Activated CD8-positive, alpha-beta T cell treated with anti-CD3 and anti-CD28 coated beads, Interleukin-2, amount 10 ng/mL, durations not matched to agents 7 days and 5 days (primary cell): ENCODE measurements at regions of chr16 and their contacts with region 1.

Region 1: DNA sequence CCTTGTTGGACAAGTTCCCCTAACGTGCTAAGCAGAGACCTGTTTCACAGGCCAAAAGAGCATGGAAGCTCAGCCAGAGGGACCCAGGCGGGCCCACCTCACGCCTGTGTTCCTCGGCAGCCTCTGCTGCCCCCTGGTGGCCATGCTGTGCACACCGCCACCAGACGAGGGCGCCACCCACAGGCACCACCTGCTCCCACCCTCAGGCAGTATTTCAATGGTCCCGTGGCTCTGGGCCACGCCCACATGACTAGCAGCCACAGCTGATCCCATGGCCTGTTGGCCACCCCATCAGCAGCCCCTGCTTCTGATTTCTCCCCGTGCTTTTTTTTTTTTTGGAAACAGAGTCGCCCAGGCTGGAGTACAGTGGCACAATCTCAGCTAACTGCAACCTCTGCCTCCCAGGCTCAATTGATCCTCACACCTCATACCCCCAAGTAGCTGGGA is 18.9 kb downstream of the MPG start:
- DNase-seq: peak; percentile 93
- ATAC-seq: peak; percentile 95
- H3K4me3 Mint-ChIP-seq: no peak overlapping the region
- H3K27ac Mint-ChIP-seq: no peak overlapping the region
- H3K4me1 Mint-ChIP-seq: peaks cover 8% of the 10 kb centered on the region
- H3K27me3 Mint-ChIP-seq: no peaks in the 10 kb centered on the region

Region 2: GRCh38 chr16:53346-54236 is 43.4 kb before region 1 on chr16 and contains the starts of genes POLR3K and SNRNP25:
- CTCF ChIA-PET with region 1: interaction called, 23 read pairs
- POLR2A ChIA-PET with region 1: interaction called, 3 read pairs
- DNase-seq: peak; percentile 99
- ATAC-seq: peak; percentile 99
- H3K4me3 Mint-ChIP-seq: peak within 1 kb of the TSS; percentile 91
- H3K27ac Mint-ChIP-seq: peak within 1 kb of the TSS; percentile 90
- H3K4me1 Mint-ChIP-seq: peaks cover 35% of the 10 kb centered on the region
- H3K27me3 Mint-ChIP-seq: no peaks in the 10 kb centered on the region
- total RNA-seq, gene POLR3K: 47.7 to 48.2 TPM
- total RNA-seq, gene SNRNP25: 62.3 to 63.2 TPM

Region 3: DNA sequence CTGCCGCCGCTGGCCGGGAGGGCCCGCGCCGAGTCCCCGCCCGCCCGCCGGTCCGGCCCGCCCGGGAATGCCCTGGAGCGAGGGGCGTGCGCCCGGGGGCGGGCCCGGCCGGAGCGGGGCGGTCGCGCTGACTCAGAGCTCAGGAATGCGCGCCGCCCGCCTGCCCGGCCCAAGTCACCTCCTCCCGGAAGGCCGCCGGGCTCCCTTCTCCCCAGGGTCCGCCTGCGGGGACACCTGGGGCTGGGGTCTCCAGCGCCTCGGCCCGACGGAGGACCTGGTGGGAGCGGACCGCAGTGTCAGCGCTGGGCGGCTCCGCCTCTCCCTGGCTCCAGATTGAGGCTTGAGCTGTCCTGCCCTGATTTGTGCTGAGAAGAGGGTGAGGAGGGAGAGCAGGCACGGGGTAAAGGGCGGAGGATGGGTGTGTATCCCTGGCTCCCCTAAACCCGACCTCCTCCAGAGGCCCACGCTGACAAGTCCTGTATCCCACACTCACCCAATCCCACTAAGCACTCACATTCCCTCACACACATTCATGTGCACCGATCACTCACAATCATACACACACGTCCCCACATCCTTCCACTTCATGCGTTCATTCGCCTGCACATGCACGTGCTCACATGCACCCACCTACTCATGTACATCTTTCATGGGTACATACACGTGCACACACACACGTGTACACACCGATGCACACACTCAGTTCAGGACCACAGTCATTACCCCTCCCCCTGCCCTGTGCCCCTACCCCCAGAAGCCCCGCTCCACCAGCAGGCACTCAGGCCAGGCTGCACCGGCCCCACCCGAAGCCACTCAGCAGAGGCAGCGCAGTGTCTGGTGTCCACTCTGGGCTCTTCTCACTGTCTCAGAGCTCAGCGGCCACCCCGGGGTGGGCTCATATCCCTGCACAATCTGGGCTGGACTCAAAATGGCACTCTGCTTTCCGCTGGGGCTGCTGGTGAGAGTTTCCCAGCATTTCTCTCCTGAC is 24.1 kb before region 1 on chr16 and contains the start of gene RHBDF1:
- CTCF ChIA-PET with region 1: interaction called, 265 read pairs
- POLR2A ChIA-PET with region 1: interaction called, 4 read pairs
- DNase-seq: no peak
- ATAC-seq: peak; percentile 40
- H3K4me3 Mint-ChIP-seq: peak within 1 kb of the TSS; percentile 22
- H3K27ac Mint-ChIP-seq: no peak within 1 kb of the TSS
- H3K4me1 Mint-ChIP-seq: peaks cover 20% of the 10 kb centered on the region
- H3K27me3 Mint-ChIP-seq: peaks cover 33% of the 10 kb centered on the region
- total RNA-seq, gene RHBDF1: 0.40 TPM in 1 of 2 experiments, not detected in the other

Region 4: GRCh38 chr16:77807-78443 is 19.0 kb before region 1 on chr16 and contains the start of gene MPG:
- CTCF ChIA-PET with region 1: interaction called, 52 read pairs
- POLR2A ChIA-PET with region 1: interaction called, 4 read pairs
- DNase-seq: peak; percentile 87
- ATAC-seq: peak; percentile 80
- H3K4me3 Mint-ChIP-seq: peak within 1 kb of the TSS; percentile 87
- H3K27ac Mint-ChIP-seq: peak within 1 kb of the TSS; percentile 87
- H3K4me1 Mint-ChIP-seq: peaks cover 32% of the 10 kb centered on the region
- H3K27me3 Mint-ChIP-seq: peaks cover 13% of the 10 kb centered on the region
- total RNA-seq, gene MPG: 48.6 to 49.3 TPM

Region 5: DNA sequence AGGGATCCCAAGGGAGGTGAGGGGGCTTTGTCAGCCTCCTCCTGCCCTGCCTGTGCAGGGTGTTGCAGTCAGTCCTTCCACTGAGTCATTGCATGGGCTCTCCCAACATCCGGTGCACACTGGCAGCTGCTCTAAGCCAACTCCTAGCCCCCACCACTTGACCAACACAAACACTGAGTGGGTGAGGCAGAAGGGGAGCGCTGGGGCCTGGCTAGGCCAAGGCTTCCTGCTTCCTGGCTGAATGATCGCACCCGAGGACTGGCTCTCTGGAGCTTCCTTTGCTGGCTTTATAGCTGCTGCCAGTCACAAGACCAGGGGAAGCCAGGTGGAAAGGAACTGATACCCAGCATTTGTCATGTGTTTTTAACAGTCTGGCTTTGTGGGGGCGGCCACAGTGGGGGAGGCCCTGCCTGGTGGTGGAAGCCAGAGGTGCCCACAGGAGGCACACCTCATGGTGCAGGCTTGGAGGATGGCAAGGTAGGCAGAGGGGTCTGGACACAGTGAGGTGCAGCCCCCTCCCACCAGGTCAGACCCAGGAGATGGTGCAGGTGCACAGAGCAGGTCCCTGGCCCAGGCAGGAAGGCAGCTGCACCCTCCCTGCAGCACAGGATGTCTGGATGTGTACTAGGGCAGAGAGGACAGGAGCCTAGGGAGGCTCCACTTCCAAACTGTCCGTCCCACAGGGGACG is 12.1 kb before region 1 on chr16:
- CTCF ChIA-PET with region 1: interaction called, 33 read pairs
- POLR2A ChIA-PET with region 1: interaction called, 3 read pairs
- DNase-seq: peak; percentile 79
- ATAC-seq: peak; percentile 76
- H3K4me3 Mint-ChIP-seq: peak overlapping the region; percentile 37
- H3K27ac Mint-ChIP-seq: peak overlapping the region; percentile 89
- H3K4me1 Mint-ChIP-seq: peaks cover 35% of the 10 kb centered on the region
- H3K27me3 Mint-ChIP-seq: no peaks in the 10 kb centered on the region

Region 6: GRCh38 chr16:117379-118365 is 20.7 kb after region 1 on chr16:
- CTCF ChIA-PET with region 1: interaction called, 15 read pairs
- POLR2A ChIA-PET with region 1: no interaction called
- DNase-seq: peak; percentile 74
- ATAC-seq: peak; percentile 90
- H3K4me3 Mint-ChIP-seq: no peak overlapping the region
- H3K27ac Mint-ChIP-seq: no peak overlapping the region
- H3K4me1 Mint-ChIP-seq: no peaks in the 10 kb centered on the region
- H3K27me3 Mint-ChIP-seq: no peaks in the 10 kb centered on the region